GM12878 (cell line): ENCODE measurements at regions of chr7 and their contacts with region 1.

Region 1: GRCh38 chr7:150753826-150754603 is 16.8 kb downstream of the GIMAP5 start:
- DNase-seq: no peak
- ATAC-seq: peak; percentile 83
- H3K4me3 ChIP-seq: no peak overlapping the region
- H3K27ac ChIP-seq: peak overlapping the region; percentile 32
- H3K4me1 ChIP-seq: peaks cover 29% of the 10 kb centered on the region
- H3K27me3 ChIP-seq: no peaks in the 10 kb centered on the region
- CTCF ChIP-seq: peak; percentile 45 to 56 (median 52); a peak in 5 of 6 replicates
- EP300 ChIP-seq: no peak
- POLR2A ChIP-seq: no peak
- RAD21 ChIP-seq: peak; percentile 71

Region 2: GRCh38 chr7:150631866-150632864 is 121.8 kb before region 1 on chr7 and contains the start of gene GIMAP6:
- CTCF ChIA-PET with region 1: interaction called, 4 read pairs
- POLR2A ChIA-PET with region 1: no interaction called
- RAD21 ChIA-PET with region 1: interaction called, 5 read pairs
- SMC1A ChIA-PET with region 1: interaction called, 9 read pairs
- in situ Hi-C with region 1: no loop called
- intact Hi-C with region 1: loop called (anchors 5 kb)
- DNase-seq: peak; percentile 51
- ATAC-seq: peak; percentile 88
- H3K4me3 ChIP-seq: peak within 1 kb of the TSS; percentile 85
- H3K27ac ChIP-seq: peak within 1 kb of the TSS; percentile 78
- H3K4me1 ChIP-seq: peaks cover 7% of the 10 kb centered on the region
- H3K27me3 ChIP-seq: no peaks in the 10 kb centered on the region
- CTCF ChIP-seq: no peak
- EP300 ChIP-seq: no peak
- POLR2A ChIP-seq: peak; percentile 57; the same call in 1 of the 2 replicates
- RAD21 ChIP-seq: peak; percentile 40
- polyA plus RNA-seq, gene GIMAP6: 6.2 to 8.3 TPM

Region 3: DNA sequence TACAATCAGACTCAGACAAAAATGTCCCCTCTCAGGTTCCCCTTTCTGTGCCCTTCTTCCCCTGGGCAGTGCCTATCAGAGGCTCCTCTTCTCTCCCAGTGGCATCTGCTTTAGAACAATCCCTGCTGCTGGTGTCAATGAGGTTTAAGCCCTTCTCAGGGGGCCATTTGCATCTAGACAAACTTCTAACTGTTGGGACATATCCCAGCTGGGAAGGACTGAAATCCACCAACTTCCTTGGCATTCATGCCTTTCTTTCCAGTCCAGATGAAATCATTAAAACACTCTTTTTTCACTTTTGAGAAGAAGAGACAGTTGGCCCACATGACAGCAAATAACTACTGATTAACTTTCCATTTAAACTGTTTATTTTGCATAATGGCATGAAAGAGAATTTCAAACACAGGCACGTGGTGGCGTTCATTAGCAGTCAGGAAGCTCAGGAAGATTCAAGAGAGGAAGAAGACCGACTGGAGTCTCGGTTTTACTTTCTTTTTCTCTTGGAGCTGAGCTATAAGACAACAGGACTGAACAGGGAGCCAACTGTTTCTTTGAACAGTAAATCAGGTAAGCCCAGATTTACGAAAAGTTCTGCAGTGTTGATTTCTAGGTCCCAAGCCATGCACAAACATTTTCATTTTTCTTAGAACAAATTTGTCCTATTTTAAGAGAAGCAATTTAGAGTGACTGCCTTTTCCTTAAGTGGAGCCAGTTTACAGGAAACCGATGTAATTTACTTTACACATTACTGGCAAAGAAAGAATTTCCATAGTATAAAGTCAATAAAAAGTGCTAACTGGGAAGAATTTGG is 68.6 kb before region 1 on chr7 and contains the start of gene GIMAP2:
- CTCF ChIA-PET with region 1: interaction called, 11 read pairs
- POLR2A ChIA-PET with region 1: no interaction called
- RAD21 ChIA-PET with region 1: interaction called, 13 read pairs
- SMC1A ChIA-PET with region 1: interaction called, 12 read pairs
- in situ Hi-C with region 1: no loop called
- intact Hi-C with region 1: loop called (anchors 1 kb)
- DNase-seq: no peak
- ATAC-seq: peak; percentile 96
- H3K4me3 ChIP-seq: peak within 1 kb of the TSS; percentile 89
- H3K27ac ChIP-seq: peak within 1 kb of the TSS; percentile 91
- H3K4me1 ChIP-seq: peaks cover 7% of the 10 kb centered on the region; the same call in 1 of the 2 replicates
- H3K27me3 ChIP-seq: no peaks in the 10 kb centered on the region
- CTCF ChIP-seq: peak in 1 of 3 experiments; percentile 7; a peak in 1 of 6 replicates
- EP300 ChIP-seq: no peak
- POLR2A ChIP-seq: 0 out of 2 replicates have a peak, but pooled peaks have one; percentile 35
- RAD21 ChIP-seq: peak; percentile 41; the same call in 1 of the 2 replicates
- polyA plus RNA-seq, gene GIMAP2: 47.5 to 60.0 TPM